Heart right ventricle (tissue), 16 donors: ENCODE measurements at regions of chr4 and their contacts with region 1.

Region 1: DNA sequence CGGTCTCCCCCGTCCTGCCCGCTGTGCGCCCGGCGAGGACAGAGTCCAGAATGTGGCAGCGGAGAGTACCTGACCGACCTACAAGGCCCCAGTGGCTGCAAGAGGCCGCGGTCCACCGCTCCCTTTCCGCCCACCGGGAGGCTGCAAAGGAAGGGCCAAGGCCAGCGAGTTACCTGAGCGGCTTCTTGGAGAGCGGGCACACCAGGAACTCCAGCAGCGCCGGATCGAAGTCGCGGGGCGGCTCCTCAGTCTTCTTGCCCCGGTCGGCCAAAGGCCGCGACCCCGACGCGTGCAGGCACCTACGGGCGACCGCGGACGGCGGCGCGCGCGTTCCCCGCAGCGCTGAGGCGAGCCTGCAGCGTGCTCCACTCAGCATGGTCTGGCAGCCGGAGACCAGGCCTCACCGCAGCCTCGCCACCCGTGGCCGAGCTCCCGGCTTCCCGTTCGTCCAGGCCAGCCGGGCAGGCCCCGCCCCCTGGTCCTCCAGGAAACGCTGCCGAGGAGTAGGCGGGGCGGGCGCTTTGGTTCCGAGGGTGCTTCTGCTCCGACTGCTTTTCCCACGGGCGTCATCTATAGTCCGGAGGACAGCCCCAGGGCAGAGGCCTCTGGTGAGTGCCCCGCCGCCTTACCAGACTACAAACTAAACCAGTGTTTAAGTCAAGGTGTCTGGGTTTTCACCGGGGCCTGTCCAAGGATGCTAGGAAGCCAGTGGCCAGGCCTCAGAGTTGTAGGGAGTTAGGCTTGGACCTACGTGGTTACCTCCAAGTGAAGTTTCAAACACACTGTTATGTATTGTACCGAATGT is at the start of gene PYURF:
- DNase-seq: peak; percentile 95 to 96
- ATAC-seq: peak; percentile 98 to 99 (median 98)
- H3K4me3 ChIP-seq: peak within 1 kb of the TSS; percentile 68 to 95 (median 92)
- H3K27ac ChIP-seq: peak within 1 kb of the TSS; percentile 79 to 97 (median 92)
- H3K4me1 ChIP-seq: peaks cover 4 to 46% (median 33%) of the 10 kb centered on the region in 9 donors
- H3K27me3 ChIP-seq: no peaks in the 10 kb centered on the region
- CTCF ChIP-seq: no peak
- total RNA-seq, gene PYURF: 44.6 to 61.6 (median 47.5) TPM

Region 2: GRCh38 chr4:88043001-88043400 is 480.5 kb before region 1 on chr4:
- intact Hi-C with region 1: loop called in 4 of 10 experiments (anchors 10 kb)
- DNase-seq: no peak
- ATAC-seq: peak in 2 of 8 donors; percentile 37 to 42
- H3K4me3 ChIP-seq: no peak overlapping the region
- H3K27ac ChIP-seq: peak overlapping the region in 1 of 10 donors; percentile 29
- H3K4me1 ChIP-seq: peaks cover 0 to 32% (median 15%) of the 10 kb centered on the region in 9 donors
- H3K27me3 ChIP-seq: no peaks in the 10 kb centered on the region
- CTCF ChIP-seq: no peak

Region 3: GRCh38 chr4:88320780-88321373 is 202.7 kb before region 1 on chr4:
- intact Hi-C with region 1: no loop called
- DNase-seq: no peak
- ATAC-seq: peak in 7 of 8 donors; percentile 41 to 69 (median 61)
- H3K4me3 ChIP-seq: no peak overlapping the region
- H3K27ac ChIP-seq: peak overlapping the region in 1 of 10 donors; percentile 51
- H3K4me1 ChIP-seq: peaks cover 0 to 18% (median 0%) of the 10 kb centered on the region in 9 donors
- H3K27me3 ChIP-seq: no peaks in the 10 kb centered on the region
- CTCF ChIP-seq: no peak

Region 4: DNA sequence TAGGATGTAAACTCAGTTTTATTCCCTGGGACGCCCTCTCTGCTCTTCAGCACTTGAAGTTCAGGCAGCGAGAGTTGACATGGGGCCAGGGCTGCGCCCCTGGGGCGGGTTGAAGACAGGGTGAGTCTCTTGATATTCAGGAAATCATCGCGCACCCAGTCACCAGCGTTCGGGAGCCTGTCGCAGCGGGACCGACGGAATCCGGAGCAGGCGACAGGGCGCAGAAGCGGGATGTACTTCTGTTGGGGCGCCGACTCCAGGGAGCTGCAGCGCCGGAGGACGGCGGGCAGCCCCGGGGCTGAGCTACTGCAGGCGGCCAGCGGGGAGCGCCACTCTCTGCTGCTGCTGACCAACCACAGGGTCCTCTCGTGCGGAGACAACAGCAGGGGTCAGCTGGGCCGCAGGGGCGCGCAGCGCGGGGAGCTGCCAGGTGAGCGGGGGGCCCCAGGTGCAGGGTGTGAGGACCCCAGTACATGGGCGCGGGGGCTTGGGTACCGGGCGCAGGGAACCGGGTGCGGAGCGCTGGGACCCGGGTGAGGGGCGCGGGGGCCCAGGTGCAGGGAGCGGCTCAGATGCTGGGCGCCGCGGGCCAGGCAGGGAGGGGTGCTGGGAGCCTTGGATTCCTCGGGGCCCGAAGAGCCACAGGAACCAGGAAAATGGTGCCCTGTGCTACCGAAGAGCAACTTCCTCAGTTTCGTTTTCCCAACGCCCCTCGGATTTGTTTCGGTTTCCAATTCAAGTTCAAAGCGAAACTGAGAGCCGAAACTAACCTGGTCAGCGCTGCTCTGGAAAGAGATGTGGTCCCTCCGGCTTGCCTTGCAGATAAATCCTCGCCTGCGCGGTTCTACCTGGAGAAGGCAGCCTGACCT is 144.6 kb before region 1 on chr4 and contains the start of gene HERC6:
- intact Hi-C with region 1: loop called in 6 of 10 experiments (anchors 5 to 10 kb)
- DNase-seq: peak; percentile 74 to 85
- ATAC-seq: peak; percentile 94 to 98 (median 96)
- H3K4me3 ChIP-seq: peak within 1 kb of the TSS; percentile 91 to 100 (median 96)
- H3K27ac ChIP-seq: peak within 1 kb of the TSS; percentile 95 to 100 (median 98)
- H3K4me1 ChIP-seq: peaks cover 0 to 14% (median 0%) of the 10 kb centered on the region in 9 donors
- H3K27me3 ChIP-seq: no peaks in the 10 kb centered on the region
- CTCF ChIP-seq: peak; percentile 50 to 89 (median 80)
- total RNA-seq, gene HERC6: 8.9 to 20.0 (median 15.8) TPM

Region 5: DNA sequence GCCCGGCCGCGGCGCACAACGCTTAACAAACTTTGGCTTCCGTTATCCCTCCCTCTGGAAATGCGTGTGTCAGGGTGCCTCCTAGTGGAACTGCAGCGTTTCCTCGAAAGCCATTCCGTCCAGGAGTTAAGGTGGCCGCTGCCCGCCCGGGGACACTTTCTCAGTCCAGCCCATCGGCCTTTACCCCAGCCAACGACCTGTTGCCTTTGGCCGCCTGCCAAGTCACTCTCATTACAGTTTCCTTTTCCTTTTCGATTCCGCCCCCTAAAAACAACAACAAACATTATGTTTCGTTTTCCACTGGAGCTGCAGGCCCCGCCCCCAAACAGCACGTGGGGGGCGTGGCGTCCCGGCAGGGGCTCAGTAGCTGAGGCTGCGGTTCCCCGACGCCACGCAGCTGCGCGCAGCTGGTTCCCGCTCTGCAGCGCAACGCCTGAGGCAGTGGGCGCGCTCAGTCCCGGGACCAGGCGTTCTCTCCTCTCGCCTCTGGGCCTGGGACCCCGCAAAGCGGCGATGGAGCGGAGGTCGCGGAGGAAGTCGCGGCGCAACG is 66.7 kb before region 1 on chr4 and contains the start of gene HERC5:
- intact Hi-C with region 1: loop called in 2 of 10 experiments (anchors 5 kb)
- DNase-seq: peak; percentile 91 to 97
- ATAC-seq: peak; percentile 95 to 98 (median 97)
- H3K4me3 ChIP-seq: peak within 1 kb of the TSS; percentile 55 to 84 (median 73)
- H3K27ac ChIP-seq: peak within 1 kb of the TSS in 9 of 10 donors; percentile 52 to 87 (median 78)
- H3K4me1 ChIP-seq: peaks cover 0 to 28% (median 12%) of the 10 kb centered on the region in 9 donors
- H3K27me3 ChIP-seq: no peaks in the 10 kb centered on the region
- CTCF ChIP-seq: peak; percentile 32 to 87 (median 66)
- total RNA-seq, gene HERC5: 1.6 to 4.7 (median 2.9) TPM

Region 6: GRCh38 chr4:88591787-88592599 is 68.5 kb after region 1 on chr4 and contains the start of gene HERC3:
- intact Hi-C with region 1: loop called in 1 of 10 experiments (anchors 5 kb)
- DNase-seq: peak; percentile 93 to 94
- ATAC-seq: peak; percentile 97 to 99 (median 98)
- H3K4me3 ChIP-seq: peak within 1 kb of the TSS; percentile 77 to 98 (median 92)
- H3K27ac ChIP-seq: peak within 1 kb of the TSS; percentile 82 to 99 (median 96)
- H3K4me1 ChIP-seq: peaks cover 0 to 40% (median 29%) of the 10 kb centered on the region in 9 donors
- H3K27me3 ChIP-seq: no peaks in the 10 kb centered on the region
- CTCF ChIP-seq: peak in 5 of 9 donors; percentile 11 to 38 (median 25)
- total RNA-seq, gene HERC3: 40.6 to 62.6 (median 47.2) TPM

Region 7: GRCh38 chr4:89024051-89024675 is 500.6 kb after region 1 on chr4:
- intact Hi-C with region 1: loop called in 2 of 10 experiments (anchors 10 kb)
- DNase-seq: peak in 1 of 2 donors; percentile 68
- ATAC-seq: peak; percentile 78 to 97 (median 95)
- H3K4me3 ChIP-seq: no peak overlapping the region
- H3K27ac ChIP-seq: no peak overlapping the region
- H3K4me1 ChIP-seq: peaks cover 0 to 23% (median 7%) of the 10 kb centered on the region in 9 donors
- H3K27me3 ChIP-seq: no peaks in the 10 kb centered on the region
- CTCF ChIP-seq: peak; percentile 57 to 92 (median 86)

Region 8: GRCh38 chr4:89039730-89040338 is 516.3 kb after region 1 on chr4:
- intact Hi-C with region 1: loop called in 1 of 10 experiments (anchors 10 kb)
- DNase-seq: no peak
- ATAC-seq: no peak
- H3K4me3 ChIP-seq: no peak overlapping the region
- H3K27ac ChIP-seq: no peak overlapping the region
- H3K4me1 ChIP-seq: no peaks in the 10 kb centered on the region
- H3K27me3 ChIP-seq: no peaks in the 10 kb centered on the region
- CTCF ChIP-seq: no peak